Posterior vena cava (tissue), 2 donors: ENCODE measurements at regions of chr13 and their contacts with region 1.

Region 1: DNA sequence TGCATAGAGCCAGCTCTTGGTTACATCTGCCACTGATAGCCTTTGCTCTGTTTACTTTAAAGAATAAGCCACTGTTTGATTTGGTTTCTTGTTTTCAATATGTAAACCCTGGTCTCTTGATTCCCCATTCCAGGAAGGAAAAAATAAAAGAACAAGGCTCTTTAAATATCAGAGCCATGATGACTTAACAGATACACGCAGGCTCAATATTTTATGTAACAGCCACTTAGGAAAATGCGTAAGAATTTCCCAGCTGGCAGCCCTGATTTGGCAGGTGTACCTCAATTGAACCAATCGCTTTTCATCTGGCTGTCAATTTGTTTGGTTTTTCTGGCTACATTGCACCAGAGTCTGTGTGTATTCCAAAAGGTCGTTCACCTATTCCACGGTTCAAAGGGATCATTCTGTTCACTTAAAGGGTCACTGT is 65.6 kb downstream of the IRS2 start:
- DNase-seq: no peak

Region 2: GRCh38 chr13:109595471-109595870 is 125.3 kb before region 1 on chr13:
- intact Hi-C with region 1: no loop called
- DNase-seq: no peak

Region 3: DNA sequence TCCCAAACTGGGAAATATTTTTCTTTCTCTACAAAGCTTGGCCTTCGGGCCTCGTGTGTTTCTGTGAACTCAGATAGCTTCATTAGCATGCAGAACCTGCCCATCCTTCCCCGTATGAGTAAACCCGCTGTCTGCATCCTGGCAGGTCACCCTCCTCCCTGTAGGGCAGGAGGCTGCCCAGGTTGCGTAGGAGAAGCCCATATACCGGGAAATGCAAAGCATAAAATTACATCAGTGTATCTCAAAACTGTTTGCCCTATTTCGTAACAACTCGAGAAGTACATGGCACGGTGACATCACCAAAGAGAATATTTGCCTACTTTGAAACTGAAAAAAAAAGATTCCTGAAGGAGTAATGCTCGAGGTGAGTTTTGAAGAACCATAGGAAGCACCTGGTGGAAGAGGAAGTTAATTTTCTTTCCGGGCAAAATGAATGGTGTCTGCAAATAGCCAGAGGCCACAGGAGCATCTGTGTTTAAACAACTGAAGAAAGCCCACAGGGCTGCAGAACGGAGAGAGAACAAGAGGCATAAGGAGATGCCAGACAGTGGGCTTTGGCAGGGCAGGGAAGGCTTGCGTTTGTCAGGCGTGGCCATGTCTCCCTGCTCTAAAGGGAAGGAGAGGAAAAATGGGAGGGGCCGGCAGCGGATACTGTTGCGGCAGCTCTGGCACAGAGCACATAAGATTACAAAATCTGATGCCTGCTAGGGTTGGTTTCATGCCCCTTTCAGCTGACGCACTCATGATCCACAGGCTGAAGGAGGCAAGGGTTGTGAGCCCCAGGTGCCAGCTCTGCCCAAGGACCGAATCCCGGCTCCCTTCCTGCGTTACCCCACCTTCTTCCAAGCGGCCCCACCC is 15.8 kb before region 1 on chr13:
- intact Hi-C with region 1: loop called in 1 of 2 experiments (anchors 1 kb)
- DNase-seq: peak; percentile 86

Region 4: DNA sequence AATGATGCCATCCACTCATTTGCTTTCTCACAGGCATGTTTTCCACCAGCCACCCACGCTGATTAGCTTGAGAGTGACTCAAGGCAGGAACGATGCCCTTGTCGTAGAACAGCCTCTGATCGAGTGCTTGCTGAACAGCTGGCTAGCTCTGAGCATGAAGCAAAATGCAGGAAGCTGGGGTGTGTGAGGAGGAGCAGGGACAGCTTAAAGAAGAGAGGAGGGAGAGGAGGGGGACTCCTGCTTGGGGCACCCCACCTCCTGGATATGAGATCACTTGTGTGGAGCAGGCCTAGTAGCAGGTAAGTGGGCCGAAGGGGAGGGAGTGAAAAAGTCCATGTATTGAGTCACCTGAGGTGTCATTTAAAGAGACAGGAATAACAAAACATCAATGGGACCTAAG is 16.8 kb after region 1 on chr13:
- intact Hi-C with region 1: loop called in 1 of 2 experiments (anchors 1 kb)
- DNase-seq: no peak

Region 5: DNA sequence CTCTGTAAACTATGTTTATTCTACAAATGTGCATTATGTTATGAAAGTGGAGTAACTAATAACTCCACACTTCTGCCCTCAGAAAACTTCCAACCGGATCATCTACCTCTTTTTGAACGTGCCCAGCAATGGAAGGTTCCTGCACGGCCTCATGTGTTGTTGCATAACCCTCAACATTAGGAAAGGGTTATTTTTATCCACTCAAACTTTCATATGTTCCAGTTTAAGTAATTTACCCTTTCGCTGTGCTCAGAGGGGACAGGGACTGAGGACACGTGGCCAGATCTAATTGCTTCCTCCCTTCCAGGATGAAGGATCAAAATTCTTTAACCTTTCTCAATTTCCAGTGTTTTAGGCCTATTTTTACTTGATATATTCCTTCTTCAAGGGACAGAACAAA is 36.0 kb after region 1 on chr13:
- intact Hi-C with region 1: no loop called
- DNase-seq: no peak